ENCODE measurements at regions of chr11 and their contacts with region 1.

Region 1: GRCh38 chr11:25981998-25982397 is 349.9 kb upstream of the ANO3 start:
- DNase-seq: peak; percentile 73
- ATAC-seq: peak; percentile 75
- H3K4me3 ChIP-seq: peak overlapping the region in 2 of 5 experiments; percentile 1 to 16
- H3K4me3 Mint-ChIP-seq: peak overlapping the region; percentile 81
- H3K27ac ChIP-seq: peak overlapping the region; percentile 42 to 63
- H3K27ac Mint-ChIP-seq: peak overlapping the region; percentile 86
- H3K4me1 ChIP-seq: peaks cover 16 to 17% of the 10 kb centered on the region in 2 donors
- H3K4me1 Mint-ChIP-seq: peaks cover 23% of the 10 kb centered on the region
- H3K27me3 ChIP-seq: no peaks in the 10 kb centered on the region
- H3K27me3 Mint-ChIP-seq: peaks cover 3% of the 10 kb centered on the region
- CTCF ChIP-seq: peak; percentile 75

Region 2: DNA sequence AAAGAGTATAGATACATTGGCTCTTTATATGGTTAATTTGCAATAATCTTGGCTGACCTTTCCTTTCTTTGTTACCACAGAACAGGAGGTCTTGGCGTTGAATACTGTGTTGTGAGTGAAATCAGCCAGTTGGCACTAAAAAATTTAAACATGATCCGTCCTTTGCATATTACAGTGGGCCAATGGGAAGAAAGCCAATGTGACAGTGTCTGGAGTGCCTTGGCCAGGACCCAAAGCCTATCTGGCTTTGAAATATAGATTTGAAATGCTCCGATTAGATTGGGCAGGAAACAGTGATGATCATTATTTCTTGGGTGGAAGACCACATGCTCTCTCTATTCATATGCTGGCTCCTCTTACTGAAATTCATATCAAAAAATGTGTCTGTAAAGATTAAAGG is 10.3 kb after region 1 on chr11:
- CTCF ChIA-PET with region 1: interaction called, 12 read pairs
- POLR2A ChIA-PET with region 1: no interaction called
- intact Hi-C with region 1: no loop called
- DNase-seq: no peak
- ATAC-seq: no peak
- H3K4me3 ChIP-seq: no peak overlapping the region
- H3K4me3 Mint-ChIP-seq: no peak overlapping the region
- H3K27ac ChIP-seq: no peak overlapping the region
- H3K27ac Mint-ChIP-seq: no peak overlapping the region
- H3K4me1 ChIP-seq: no peaks in the 10 kb centered on the region
- H3K4me1 Mint-ChIP-seq: no peaks in the 10 kb centered on the region
- H3K27me3 ChIP-seq: no peaks in the 10 kb centered on the region
- H3K27me3 Mint-ChIP-seq: no peaks in the 10 kb centered on the region
- CTCF ChIP-seq: no peak

Region 3: DNA sequence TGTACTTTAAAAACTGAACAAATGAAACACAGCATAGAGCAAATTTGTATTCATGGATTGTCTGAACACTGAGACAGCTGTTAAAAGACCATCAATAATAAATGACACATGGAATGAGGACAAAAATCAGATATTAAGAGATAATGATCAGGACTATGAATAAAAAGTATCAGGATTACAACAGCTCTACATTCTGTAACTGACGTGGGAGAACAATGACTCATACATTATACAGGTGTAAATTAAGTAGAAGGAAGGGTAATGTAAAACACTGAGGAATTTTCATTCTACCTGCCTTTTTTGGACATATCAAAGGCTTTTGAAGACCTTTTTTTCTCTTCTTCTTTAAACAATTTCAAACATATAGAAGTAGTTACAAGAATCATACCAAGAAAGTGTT is 39.0 kb after region 1 on chr11:
- CTCF ChIA-PET with region 1: interaction called, 11 read pairs
- POLR2A ChIA-PET with region 1: no interaction called
- intact Hi-C with region 1: no loop called
- DNase-seq: no peak
- ATAC-seq: no peak
- H3K4me3 ChIP-seq: no peak overlapping the region
- H3K4me3 Mint-ChIP-seq: no peak overlapping the region
- H3K27ac ChIP-seq: no peak overlapping the region
- H3K27ac Mint-ChIP-seq: no peak overlapping the region
- H3K4me1 ChIP-seq: no peaks in the 10 kb centered on the region
- H3K4me1 Mint-ChIP-seq: peaks cover 7% of the 10 kb centered on the region
- H3K27me3 ChIP-seq: no peaks in the 10 kb centered on the region
- H3K27me3 Mint-ChIP-seq: no peaks in the 10 kb centered on the region
- CTCF ChIP-seq: no peak

Region 4: DNA sequence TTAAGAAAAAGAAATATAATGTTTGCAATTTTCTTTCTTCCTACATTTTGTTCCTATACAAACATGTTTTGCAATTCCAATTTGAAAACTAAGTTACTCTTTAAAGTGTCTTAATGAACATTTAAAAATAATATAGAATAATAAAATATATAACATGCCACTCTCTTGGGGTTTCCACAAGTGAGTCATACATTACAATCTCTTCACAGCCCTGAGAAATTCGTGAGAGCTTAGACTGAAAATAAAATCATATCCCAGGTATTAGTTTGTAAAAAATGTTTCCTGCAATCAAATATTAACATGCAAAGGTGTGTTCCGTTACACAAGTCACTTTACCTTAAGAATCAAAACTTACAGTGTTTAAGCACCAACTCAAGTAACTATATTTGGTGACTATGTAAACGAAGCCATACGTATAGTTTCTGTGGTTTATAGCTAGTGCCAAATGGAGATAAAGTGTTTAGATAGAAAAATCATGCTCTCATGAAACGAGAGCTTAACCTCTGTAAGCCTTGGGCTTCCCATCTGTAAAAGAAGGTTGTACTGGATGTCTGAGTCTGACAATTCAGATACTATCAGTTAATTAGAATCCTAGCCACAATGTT is 96.3 kb after region 1 on chr11:
- CTCF ChIA-PET with region 1: no interaction called
- POLR2A ChIA-PET with region 1: no interaction called
- intact Hi-C with region 1: no loop called
- DNase-seq: no peak
- ATAC-seq: no peak
- H3K4me3 ChIP-seq: no peak overlapping the region
- H3K4me3 Mint-ChIP-seq: no peak overlapping the region
- H3K27ac ChIP-seq: no peak overlapping the region
- H3K27ac Mint-ChIP-seq: no peak overlapping the region
- H3K4me1 ChIP-seq: no peaks in the 10 kb centered on the region
- H3K4me1 Mint-ChIP-seq: no peaks in the 10 kb centered on the region
- H3K27me3 ChIP-seq: no peaks in the 10 kb centered on the region
- H3K27me3 Mint-ChIP-seq: no peaks in the 10 kb centered on the region
- CTCF ChIP-seq: no peak

Region 5: GRCh38 chr11:26134481-26135355 is 152.7 kb after region 1 on chr11:
- CTCF ChIA-PET with region 1: interaction called, 43 read pairs
- POLR2A ChIA-PET with region 1: no interaction called
- intact Hi-C with region 1: loop called (anchors 1 kb)
- DNase-seq: peak; percentile 30
- ATAC-seq: no peak
- H3K4me3 ChIP-seq: peak overlapping the region in 1 of 5 experiments; percentile 26
- H3K4me3 Mint-ChIP-seq: peak overlapping the region; percentile 50
- H3K27ac ChIP-seq: no peak overlapping the region
- H3K27ac Mint-ChIP-seq: peak overlapping the region; percentile 44
- H3K4me1 ChIP-seq: peaks cover 9 to 10% of the 10 kb centered on the region in 2 donors
- H3K4me1 Mint-ChIP-seq: peaks cover 21% of the 10 kb centered on the region
- H3K27me3 ChIP-seq: no peaks in the 10 kb centered on the region
- H3K27me3 Mint-ChIP-seq: no peaks in the 10 kb centered on the region
- CTCF ChIP-seq: peak; percentile 15

Region 6: DNA sequence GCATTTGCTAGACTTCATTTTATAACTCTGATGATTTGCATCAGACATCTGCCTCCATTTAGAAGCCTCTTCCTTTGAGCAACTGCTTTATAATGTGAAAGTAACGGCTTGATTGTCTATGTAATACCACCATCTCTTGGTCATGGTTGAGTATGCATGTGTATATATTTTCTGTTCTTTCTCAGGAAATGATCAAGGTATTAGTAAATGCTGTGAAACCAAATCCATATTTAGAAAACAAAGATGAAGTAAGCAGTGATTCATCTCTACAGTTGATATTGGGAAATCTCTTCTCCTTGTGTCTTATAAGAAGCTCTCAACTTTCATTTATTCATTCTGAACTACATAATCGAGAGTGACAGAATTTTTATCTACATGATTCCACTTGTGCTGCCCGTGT is 245.3 kb after region 1 on chr11:
- CTCF ChIA-PET with region 1: interaction called, 74 read pairs
- POLR2A ChIA-PET with region 1: interaction called, 5 read pairs
- intact Hi-C with region 1: loop called (anchors 1 kb)
- DNase-seq: peak; percentile 65
- ATAC-seq: peak; percentile 58
- H3K4me3 ChIP-seq: no peak overlapping the region
- H3K4me3 Mint-ChIP-seq: no peak overlapping the region
- H3K27ac ChIP-seq: no peak overlapping the region
- H3K27ac Mint-ChIP-seq: no peak overlapping the region
- H3K4me1 ChIP-seq: peaks cover 0 to 4% of the 10 kb centered on the region in 2 donors
- H3K4me1 Mint-ChIP-seq: peaks cover 5% of the 10 kb centered on the region
- H3K27me3 ChIP-seq: no peaks in the 10 kb centered on the region
- H3K27me3 Mint-ChIP-seq: peaks cover 3% of the 10 kb centered on the region
- CTCF ChIP-seq: peak; percentile 73

Region 7: DNA sequence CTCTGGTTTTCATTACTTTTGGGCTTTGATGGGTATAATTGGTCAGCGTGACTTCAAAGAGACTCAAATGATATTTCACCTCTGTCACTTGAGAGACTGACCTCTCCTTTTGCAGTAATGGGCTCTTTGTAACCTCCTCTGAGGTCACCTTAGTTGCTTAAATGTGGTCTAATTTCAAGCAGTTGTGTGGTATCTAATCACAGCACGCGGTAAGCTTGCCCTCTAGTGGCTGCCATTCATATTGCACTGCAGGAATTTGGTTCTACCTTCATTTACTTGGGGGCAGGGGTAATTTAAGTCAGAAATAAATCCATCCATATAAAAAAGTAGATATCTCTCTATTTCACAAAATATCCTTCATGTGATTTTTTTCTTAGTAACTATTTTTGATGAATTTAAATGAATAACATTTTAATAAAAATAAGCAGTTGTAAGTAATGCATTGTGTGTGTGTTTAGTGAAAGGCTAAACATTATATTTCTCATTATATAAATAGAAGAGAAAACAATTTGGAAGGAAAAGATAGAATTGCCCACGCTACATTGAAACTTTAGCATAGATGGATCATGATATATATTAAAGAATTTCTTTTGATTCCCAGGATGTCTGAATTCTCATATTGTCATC is 294.9 kb after region 1 on chr11:
- CTCF ChIA-PET with region 1: interaction called, 20 read pairs
- POLR2A ChIA-PET with region 1: no interaction called
- intact Hi-C with region 1: loop called (anchors 1 kb)
- DNase-seq: peak; percentile 67
- ATAC-seq: peak; percentile 64
- H3K4me3 ChIP-seq: no peak overlapping the region
- H3K4me3 Mint-ChIP-seq: no peak overlapping the region
- H3K27ac ChIP-seq: no peak overlapping the region
- H3K27ac Mint-ChIP-seq: no peak overlapping the region
- H3K4me1 ChIP-seq: no peaks in the 10 kb centered on the region
- H3K4me1 Mint-ChIP-seq: peaks cover 1% of the 10 kb centered on the region
- H3K27me3 ChIP-seq: peaks cover 0 to 4% (median 0%) of the 10 kb centered on the region in 4 experiments
- H3K27me3 Mint-ChIP-seq: peaks cover 12% of the 10 kb centered on the region
- CTCF ChIP-seq: peak; percentile 100